CD4-positive, alpha-beta memory T cell (primary cell): ENCODE measurements at regions of chr19 and their contacts with region 1.

Region 1: DNA sequence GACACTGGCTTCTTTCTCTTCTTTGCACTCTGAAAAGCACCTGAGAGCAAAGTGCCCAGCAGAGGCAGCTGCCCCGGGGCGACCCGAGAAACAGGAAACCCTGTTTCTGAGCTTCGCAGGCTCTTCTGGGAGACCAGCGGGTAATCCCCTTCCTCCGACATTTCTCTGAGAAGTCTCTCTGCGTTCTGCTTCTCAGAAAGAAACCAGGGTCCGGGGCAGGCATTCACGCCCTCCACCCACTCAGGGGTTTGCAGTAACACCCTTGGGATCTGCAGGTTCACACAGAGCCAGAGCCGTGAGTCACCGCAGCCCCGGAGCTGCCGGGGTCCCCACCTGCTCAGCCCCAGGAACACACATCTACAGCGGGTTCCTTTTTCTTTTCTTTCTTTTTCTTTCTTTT is 86.0 kb downstream of the GADD45B start:
- DNase-seq: peak; percentile 60 to 81 (median 69)
- H3K4me3 ChIP-seq: peak overlapping the region; percentile 48 to 75
- H3K4me3 Mint-ChIP-seq: peak overlapping the region; percentile 90 to 98 (median 94)
- H3K27ac ChIP-seq: peak overlapping the region; percentile 64
- H3K27ac Mint-ChIP-seq: peak overlapping the region; percentile 93 to 97 (median 95)
- H3K4me1 ChIP-seq: peaks cover 15% of the 10 kb centered on the region
- H3K4me1 Mint-ChIP-seq: peaks cover 8 to 26% (median 14%) of the 10 kb centered on the region in 4 donors
- H3K27me3 ChIP-seq: no peaks in the 10 kb centered on the region
- H3K27me3 Mint-ChIP-seq: peaks cover 0 to 1% of the 10 kb centered on the region in 2 donors

Region 2: DNA sequence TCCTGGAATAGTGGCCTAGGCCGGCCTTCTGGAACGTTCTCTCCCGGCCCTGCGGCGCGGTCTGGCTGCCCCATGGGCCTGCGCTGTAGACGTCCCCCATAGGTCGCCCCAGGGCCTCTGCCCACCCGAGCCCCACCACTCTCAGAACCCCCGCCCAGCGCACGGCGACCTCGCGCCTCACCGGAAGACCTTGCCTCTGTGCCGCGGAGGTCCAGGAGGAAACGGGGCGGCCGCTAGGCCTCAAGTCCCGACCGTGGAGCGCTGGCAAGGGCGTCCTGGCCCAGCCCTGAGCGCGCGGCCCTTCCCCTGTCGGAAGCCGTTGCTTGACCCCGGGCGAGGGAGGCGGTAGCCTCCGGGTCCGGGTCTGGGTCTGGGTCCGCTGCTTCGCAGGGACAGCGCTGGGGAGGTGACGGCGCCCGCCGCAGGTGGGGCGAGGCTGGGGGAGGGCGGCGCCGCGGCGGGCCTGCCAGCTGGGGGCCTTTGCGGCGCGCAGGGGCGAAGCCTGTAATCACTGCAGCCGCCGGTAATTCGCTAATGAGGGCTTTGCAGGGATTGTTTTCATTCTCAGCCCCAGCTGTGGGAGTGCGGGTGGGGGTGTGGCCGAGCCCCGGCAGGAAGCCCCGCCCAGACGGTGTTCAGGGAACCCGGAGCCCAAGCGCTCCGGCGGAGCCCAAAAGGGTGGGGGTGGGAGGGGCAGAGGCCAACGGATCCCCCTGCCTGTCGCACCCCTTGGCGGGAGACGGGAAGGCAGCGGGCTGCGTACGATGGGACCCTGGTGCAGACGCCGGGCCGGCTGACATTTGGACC is 1091.5 kb before region 1 on chr19:
- CTCF ChIA-PET with region 1: no interaction called
- POLR2A ChIA-PET with region 1: no interaction called
- intact Hi-C with region 1: no loop called
- DNase-seq: peak; percentile 66 to 80 (median 70)
- H3K4me3 ChIP-seq: peak overlapping the region; percentile 57 to 58
- H3K4me3 Mint-ChIP-seq: peak overlapping the region; percentile 67 to 83 (median 77)
- H3K27ac ChIP-seq: no peak overlapping the region
- H3K27ac Mint-ChIP-seq: peak overlapping the region in 1 of 7 donors; percentile 58
- H3K4me1 ChIP-seq: peaks cover 54% of the 10 kb centered on the region
- H3K4me1 Mint-ChIP-seq: peaks cover 3 to 21% (median 8%) of the 10 kb centered on the region in 4 donors
- H3K27me3 ChIP-seq: no peaks in the 10 kb centered on the region
- H3K27me3 Mint-ChIP-seq: peaks cover 0 to 1% of the 10 kb centered on the region in 2 donors

Region 3: GRCh38 chr19:2512523-2513431 is 49.1 kb before region 1 on chr19:
- CTCF ChIA-PET with region 1: no interaction called
- POLR2A ChIA-PET with region 1: no interaction called
- intact Hi-C with region 1: no loop called
- DNase-seq: no peak
- H3K4me3 ChIP-seq: no peak overlapping the region
- H3K4me3 Mint-ChIP-seq: no peak overlapping the region
- H3K27ac ChIP-seq: no peak overlapping the region
- H3K27ac Mint-ChIP-seq: no peak overlapping the region
- H3K4me1 ChIP-seq: peaks cover under 1% of the 10 kb centered on the region
- H3K4me1 Mint-ChIP-seq: peaks cover 3 to 8% (median 4%) of the 10 kb centered on the region in 4 donors
- H3K27me3 ChIP-seq: no peaks in the 10 kb centered on the region
- H3K27me3 Mint-ChIP-seq: no peaks in the 10 kb centered on the region

Region 4: DNA sequence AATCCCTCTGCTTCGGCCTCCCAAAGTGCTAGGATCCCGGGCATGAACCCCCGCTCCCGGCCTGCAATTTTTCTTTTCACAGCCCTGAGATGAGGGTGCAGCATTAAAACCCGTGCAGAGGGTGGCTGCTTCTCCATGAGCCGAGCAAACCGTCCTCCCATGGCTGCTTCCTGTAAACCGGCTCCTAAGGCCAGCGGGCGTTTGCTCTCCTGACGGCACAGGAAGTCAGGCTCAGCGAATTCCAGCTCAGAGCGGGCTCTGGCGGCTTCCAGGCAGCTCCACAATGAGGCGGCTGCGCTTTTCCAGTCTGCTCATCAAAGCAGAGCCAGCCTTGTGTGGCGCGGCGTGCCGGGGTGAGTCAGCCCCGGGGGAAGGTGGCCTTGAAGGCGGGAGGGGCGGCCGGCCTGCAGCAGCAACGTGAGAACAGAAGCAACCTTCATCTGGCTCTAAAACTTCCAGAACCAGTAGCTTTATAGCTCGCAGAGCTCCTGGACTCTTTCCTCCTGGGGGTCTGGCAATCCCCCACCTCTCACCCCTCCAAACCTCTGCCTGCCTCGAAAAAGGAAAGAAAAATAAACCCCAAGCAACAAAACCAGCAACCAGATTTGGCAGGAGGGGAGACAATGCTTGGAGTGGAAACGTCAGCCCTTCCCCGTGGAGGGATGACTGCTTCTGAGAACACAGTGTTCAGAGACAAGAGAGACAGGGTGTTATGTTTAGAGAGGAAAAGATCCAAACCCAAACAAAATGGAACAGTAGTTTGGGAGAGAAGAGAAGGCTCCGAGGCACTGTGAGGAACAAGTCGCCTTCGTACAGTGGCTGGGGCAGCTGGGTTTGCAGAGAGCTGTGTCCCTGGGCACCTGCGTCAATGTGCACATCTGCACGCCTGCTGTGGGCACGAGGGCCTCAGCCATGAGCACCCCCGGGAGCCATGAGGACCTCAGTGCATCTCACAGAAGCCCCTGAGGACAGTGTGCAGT is 18.1 kb before region 1 on chr19:
- CTCF ChIA-PET with region 1: interaction called, 3 read pairs
- POLR2A ChIA-PET with region 1: interaction called, 11 read pairs
- intact Hi-C with region 1: no loop called
- DNase-seq: peak; percentile 11 to 75 (median 28)
- H3K4me3 ChIP-seq: peak overlapping the region in 1 of 2 donors; percentile 34
- H3K4me3 Mint-ChIP-seq: peak overlapping the region; percentile 55 to 85 (median 70)
- H3K27ac ChIP-seq: no peak overlapping the region
- H3K27ac Mint-ChIP-seq: peak overlapping the region in 2 of 7 donors; percentile 17 to 65
- H3K4me1 ChIP-seq: peaks cover 22% of the 10 kb centered on the region
- H3K4me1 Mint-ChIP-seq: peaks cover 2 to 17% (median 13%) of the 10 kb centered on the region in 4 donors
- H3K27me3 ChIP-seq: no peaks in the 10 kb centered on the region
- H3K27me3 Mint-ChIP-seq: no peaks in the 10 kb centered on the region